ENCODE measurements at regions of chr7 and their contacts with region 1.

Region 1: DNA sequence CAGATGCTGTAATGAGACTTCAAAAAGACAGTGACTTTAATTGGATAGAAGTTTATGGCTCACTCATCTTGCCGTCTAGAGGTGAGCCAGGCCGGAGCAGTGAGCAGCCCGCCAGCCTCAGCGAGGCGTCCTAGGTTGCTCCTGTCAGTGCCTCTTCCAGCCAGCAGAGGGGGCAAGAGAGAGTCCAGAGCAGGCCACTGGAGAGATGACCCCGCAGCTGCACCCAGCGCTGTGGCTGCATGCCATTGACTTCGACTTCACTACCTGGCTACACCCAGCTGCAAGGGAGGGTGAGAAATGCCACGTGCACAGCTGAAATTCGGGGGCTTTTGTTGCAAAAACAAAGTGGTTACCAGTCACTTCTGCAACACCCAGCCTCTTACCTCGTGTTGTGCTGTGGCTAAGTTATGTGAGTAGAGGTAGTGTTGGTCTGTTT is 26.5 kb downstream of the NUB1 start:
- DNase-seq: no peak
- ATAC-seq: peak; percentile 100
- H3K4me3 ChIP-seq: no peak overlapping the region
- H3K27ac ChIP-seq: no peak overlapping the region
- H3K4me1 ChIP-seq: no peaks in the 10 kb centered on the region
- H3K27me3 ChIP-seq: no peaks in the 10 kb centered on the region
- CTCF ChIP-seq: peak; percentile 86 to 95 (median 88)
- EP300 ChIP-seq: no peak
- POLR2A ChIP-seq: no peak
- RAD21 ChIP-seq: peak; percentile 70

Region 2: DNA sequence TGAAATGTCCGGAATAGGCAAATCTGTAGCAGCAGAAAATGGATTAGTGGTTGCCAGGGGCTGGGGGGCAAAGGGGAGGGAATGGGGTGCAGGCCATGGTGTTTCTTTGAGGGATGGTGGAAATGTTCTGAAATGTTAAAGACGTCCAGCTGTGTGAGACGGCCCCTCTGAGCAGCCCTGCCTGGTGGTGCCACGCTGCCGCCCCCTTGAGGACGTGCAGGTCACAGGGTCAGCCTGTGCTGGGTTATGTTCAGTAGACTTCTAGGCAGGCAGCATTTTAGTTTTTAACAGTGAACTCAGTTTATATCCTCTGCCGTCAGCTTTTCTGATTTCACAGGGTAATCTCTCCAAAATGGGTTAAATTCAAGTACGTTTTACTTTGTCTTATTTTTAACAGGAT is 17.1 kb before region 1 on chr7:
- CTCF ChIA-PET with region 1: interaction called, 25 read pairs
- POLR2A ChIA-PET with region 1: no interaction called
- RAD21 ChIA-PET with region 1: interaction called, 7 read pairs
- SMC1A ChIA-PET with region 1: interaction called, 7 read pairs
- in situ Hi-C with region 1: no loop called
- intact Hi-C with region 1: no loop called
- DNase-seq: no peak
- ATAC-seq: peak; percentile 76
- H3K4me3 ChIP-seq: peak overlapping the region; percentile 34; the same call in 1 of the 2 replicates
- H3K27ac ChIP-seq: peak overlapping the region; percentile 94
- H3K4me1 ChIP-seq: peaks cover 37% of the 10 kb centered on the region
- H3K27me3 ChIP-seq: no peaks in the 10 kb centered on the region
- CTCF ChIP-seq: peak; percentile 56 to 67 (median 59)
- EP300 ChIP-seq: no peak
- POLR2A ChIP-seq: no peak
- RAD21 ChIP-seq: peak; percentile 54

Region 3: GRCh38 chr7:151408839-151409666 is 40.9 kb after region 1 on chr7:
- CTCF ChIA-PET with region 1: no interaction called
- POLR2A ChIA-PET with region 1: no interaction called
- RAD21 ChIA-PET with region 1: no interaction called
- SMC1A ChIA-PET with region 1: no interaction called
- in situ Hi-C with region 1: no loop called
- intact Hi-C with region 1: loop called (anchors 2 kb)
- DNase-seq: peak; percentile 23
- ATAC-seq: peak; percentile 88
- H3K4me3 ChIP-seq: no peak overlapping the region
- H3K27ac ChIP-seq: no peak overlapping the region
- H3K4me1 ChIP-seq: no peaks in the 10 kb centered on the region
- H3K27me3 ChIP-seq: peaks cover 12 to 15% of the 10 kb centered on the region in 2 experiments; a peak in 3 of 4 replicates
- CTCF ChIP-seq: peak in 2 of 3 experiments; percentile 7 to 29; a peak in 2 of 6 replicates
- EP300 ChIP-seq: no peak
- POLR2A ChIP-seq: no peak
- RAD21 ChIP-seq: no peak

Region 4: DNA sequence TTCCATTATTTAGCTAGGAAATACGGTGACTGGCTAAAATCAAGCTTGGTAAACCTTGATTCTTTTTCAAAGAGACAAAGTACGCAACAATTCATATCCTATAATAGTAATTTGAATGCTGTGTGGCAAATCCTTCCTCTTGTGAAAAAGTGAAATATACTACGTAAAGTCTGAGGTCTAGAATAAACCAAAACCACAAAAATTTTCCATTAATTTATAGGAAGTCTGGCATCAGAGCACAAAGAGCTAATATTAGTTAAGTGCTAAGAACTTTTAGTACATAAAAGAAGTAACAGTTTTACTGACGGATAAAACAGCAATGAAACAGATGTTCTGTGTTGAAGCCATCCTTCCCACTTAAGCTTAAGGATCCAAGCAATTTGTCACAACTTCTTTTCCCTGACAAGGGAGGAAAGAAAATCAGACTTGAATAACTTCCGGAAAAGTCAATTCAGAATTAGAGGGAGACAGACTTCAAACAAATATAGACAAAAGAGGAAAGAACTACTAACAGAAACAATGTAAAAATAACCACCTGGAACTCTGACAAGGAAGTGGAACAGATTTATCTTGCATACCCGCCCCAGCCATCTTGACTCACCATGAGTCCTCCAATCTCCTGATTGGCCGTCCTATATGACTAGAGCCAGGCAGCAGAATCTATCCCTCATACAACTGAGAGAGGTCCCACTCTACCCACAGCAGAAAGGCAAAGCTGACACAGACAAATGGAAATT is 117.0 kb after region 1 on chr7:
- CTCF ChIA-PET with region 1: no interaction called
- POLR2A ChIA-PET with region 1: no interaction called
- RAD21 ChIA-PET with region 1: no interaction called
- SMC1A ChIA-PET with region 1: no interaction called
- in situ Hi-C with region 1: no loop called
- intact Hi-C with region 1: no loop called
- DNase-seq: no peak
- ATAC-seq: peak; percentile 49; the same call in 2 of the 3 replicates
- H3K4me3 ChIP-seq: no peak overlapping the region
- H3K27ac ChIP-seq: peak overlapping the region; percentile 61
- H3K4me1 ChIP-seq: peaks cover 23% of the 10 kb centered on the region
- H3K27me3 ChIP-seq: no peaks in the 10 kb centered on the region
- CTCF ChIP-seq: no peak
- EP300 ChIP-seq: no peak
- POLR2A ChIP-seq: no peak
- RAD21 ChIP-seq: no peak

Region 5: GRCh38 chr7:151754142-151754590 is 386.0 kb after region 1 on chr7:
- CTCF ChIA-PET with region 1: interaction called, 10 read pairs
- POLR2A ChIA-PET with region 1: no interaction called
- RAD21 ChIA-PET with region 1: interaction called, 3 read pairs
- SMC1A ChIA-PET with region 1: no interaction called
- in situ Hi-C with region 1: loop called (anchors 5 kb)
- intact Hi-C with region 1: loop called (anchors 1 kb)
- DNase-seq: no peak
- ATAC-seq: peak; percentile 90
- H3K4me3 ChIP-seq: no peak overlapping the region
- H3K27ac ChIP-seq: no peak overlapping the region
- H3K4me1 ChIP-seq: no peaks in the 10 kb centered on the region
- H3K27me3 ChIP-seq: no peaks in the 10 kb centered on the region
- CTCF ChIP-seq: peak; percentile 68 to 81 (median 74)
- EP300 ChIP-seq: no peak
- POLR2A ChIP-seq: no peak
- RAD21 ChIP-seq: peak; percentile 26; the same call in 1 of the 2 replicates

Region 6: DNA sequence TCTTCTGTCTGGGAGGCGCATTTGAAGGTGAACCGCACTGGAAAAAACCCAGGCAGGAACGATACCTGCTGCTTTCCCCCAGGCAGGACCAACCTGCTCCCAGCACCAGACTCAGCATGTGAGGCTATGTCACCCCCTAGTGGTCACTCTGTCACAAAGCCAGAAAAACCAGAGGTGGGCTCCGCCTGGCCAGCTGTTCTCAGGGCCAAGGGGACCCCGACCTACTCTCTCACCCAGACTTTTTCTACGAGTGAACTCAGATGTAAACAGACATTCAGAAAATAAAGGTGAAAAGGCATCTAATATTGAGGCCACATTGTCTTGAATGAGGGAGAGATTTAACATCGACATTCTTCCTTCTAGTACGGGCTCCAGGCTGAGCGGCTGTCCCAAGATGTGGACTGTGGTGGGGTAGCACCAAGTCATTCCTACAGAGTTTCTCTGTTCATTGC is 391.5 kb after region 1 on chr7:
- CTCF ChIA-PET with region 1: interaction called, 10 read pairs
- POLR2A ChIA-PET with region 1: no interaction called
- RAD21 ChIA-PET with region 1: interaction called, 4 read pairs
- SMC1A ChIA-PET with region 1: interaction called, 3 read pairs
- in situ Hi-C with region 1: loop called (anchors 5 kb)
- intact Hi-C with region 1: loop called (anchors 1 kb)
- DNase-seq: no peak
- ATAC-seq: peak; percentile 91
- H3K4me3 ChIP-seq: no peak overlapping the region; the same call in 1 of the 2 replicates
- H3K27ac ChIP-seq: no peak overlapping the region
- H3K4me1 ChIP-seq: no peaks in the 10 kb centered on the region
- H3K27me3 ChIP-seq: no peaks in the 10 kb centered on the region; a peak in 1 of 4 replicates
- CTCF ChIP-seq: peak; percentile 87 to 89 (median 88)
- EP300 ChIP-seq: no peak
- POLR2A ChIP-seq: no peak
- RAD21 ChIP-seq: peak; percentile 94

Region 7: DNA sequence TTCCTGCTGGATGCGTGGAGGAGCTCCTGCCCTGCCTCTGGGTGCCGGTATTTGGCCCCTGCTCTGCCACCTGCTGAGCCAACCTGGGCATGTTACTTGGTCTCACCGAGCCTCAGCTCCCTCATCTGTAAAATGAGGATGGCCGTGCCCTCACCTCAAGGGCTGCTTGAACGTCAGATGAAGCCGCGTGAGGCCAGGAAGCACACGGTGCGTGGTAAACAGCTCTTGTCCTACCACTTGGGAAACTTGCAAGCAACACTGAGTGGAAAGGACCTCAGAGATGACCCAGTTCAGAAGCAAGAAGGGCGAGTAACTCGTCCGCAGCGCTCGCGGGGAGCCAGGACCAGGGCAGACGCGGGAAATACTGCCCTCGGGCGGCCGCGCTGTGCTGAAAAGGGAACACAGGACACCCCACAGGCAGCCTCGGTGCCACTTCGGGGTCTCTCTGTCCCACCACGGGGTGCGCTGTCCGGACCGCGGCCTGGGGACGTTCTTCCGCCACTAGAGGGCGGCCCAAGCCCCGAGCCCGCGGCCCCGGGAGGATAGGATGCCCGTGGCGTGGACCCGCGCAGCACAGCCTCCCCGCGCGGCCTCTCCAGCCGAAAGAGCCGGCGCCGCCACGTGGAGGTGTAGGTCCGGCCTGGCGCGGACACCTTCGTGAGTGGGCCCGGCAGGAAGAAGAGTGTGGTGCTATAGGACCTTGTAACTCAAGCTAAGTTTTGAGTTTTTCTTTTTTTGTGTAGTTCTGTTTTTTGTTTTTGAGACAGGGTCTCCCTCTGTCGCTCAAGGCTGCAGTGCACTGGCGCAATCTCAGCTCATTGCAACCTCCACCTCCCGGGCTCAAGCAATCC is 414.7 kb after region 1 on chr7:
- CTCF ChIA-PET with region 1: no interaction called
- POLR2A ChIA-PET with region 1: no interaction called
- RAD21 ChIA-PET with region 1: no interaction called
- SMC1A ChIA-PET with region 1: no interaction called
- in situ Hi-C with region 1: no loop called
- intact Hi-C with region 1: no loop called
- DNase-seq: no peak
- ATAC-seq: peak; percentile 99
- H3K4me3 ChIP-seq: no peak overlapping the region
- H3K27ac ChIP-seq: no peak overlapping the region
- H3K4me1 ChIP-seq: no peaks in the 10 kb centered on the region
- H3K27me3 ChIP-seq: no peaks in the 10 kb centered on the region; a peak in 1 of 4 replicates
- CTCF ChIP-seq: peak; percentile 80 to 94 (median 92)
- EP300 ChIP-seq: no peak
- POLR2A ChIP-seq: no peak
- RAD21 ChIP-seq: peak; percentile 42

Measured in GM12878 (cell line).